ENCODE measurements at regions of chr19 and their contacts with region 1.

Region 1: DNA sequence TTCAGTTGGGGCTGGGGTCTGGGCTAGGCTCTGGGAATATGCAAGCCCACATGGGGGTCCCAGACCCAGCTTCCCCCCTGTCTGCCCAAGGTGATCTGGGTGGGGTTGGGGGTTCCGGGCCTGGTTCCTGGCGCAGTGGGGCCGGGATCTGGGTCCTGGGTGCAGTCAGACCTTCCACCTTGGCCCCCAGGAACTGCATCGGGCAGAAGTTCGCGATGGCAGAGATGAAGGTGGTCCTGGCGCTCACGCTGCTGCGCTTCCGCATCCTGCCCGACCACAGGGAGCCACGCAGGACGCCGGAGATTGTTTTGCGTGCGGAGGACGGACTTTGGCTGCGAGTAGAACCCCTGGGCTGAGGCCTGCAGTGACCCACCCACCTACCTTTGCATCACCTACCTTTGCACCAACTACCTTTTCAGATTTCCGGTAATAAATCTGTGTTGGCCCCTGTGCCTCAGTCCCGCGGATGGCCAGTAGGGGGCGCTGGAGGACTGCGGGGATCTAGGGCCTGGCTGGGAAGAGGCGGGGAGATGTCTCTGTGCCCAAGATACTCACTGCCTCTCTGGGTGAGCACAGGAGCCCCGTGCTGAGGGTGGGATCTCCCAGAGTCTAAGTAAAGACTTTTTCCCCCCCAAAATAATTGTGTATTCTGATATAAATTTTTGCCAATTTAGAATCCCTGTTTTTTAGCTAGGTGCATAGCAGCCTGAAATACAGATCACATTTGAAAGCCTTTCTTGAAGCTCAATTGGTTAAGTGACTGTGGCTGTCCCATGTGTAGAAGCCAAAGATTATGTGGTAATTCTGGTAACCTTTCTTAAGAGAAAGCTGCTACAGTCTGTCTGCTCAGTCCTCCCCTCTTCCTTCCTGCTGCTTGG is 11.5 kb upstream of the CYP4F3 start:
- DNase-seq: peak; percentile 69 to 80
- H3K4me3 ChIP-seq: no peak overlapping the region
- H3K27ac ChIP-seq: no peak overlapping the region
- H3K4me1 ChIP-seq: 0 out of 2 replicates have a peak, but pooled peaks cover 3% of the 10 kb centered on the region
- H3K27me3 ChIP-seq: no peaks in the 10 kb centered on the region
- CTCF ChIP-seq: peak; percentile 100

Region 2: GRCh38 chr19:15584541-15585115 is 44.6 kb before region 1 on chr19:
- CTCF ChIA-PET with region 1: no interaction called
- POLR2A ChIA-PET with region 1: no interaction called
- intact Hi-C with region 1: loop called (anchors 2 kb)
- DNase-seq: peak; percentile 68 to 78
- H3K4me3 ChIP-seq: no peak overlapping the region
- H3K27ac ChIP-seq: no peak overlapping the region
- H3K4me1 ChIP-seq: no peaks in the 10 kb centered on the region
- H3K27me3 ChIP-seq: peaks cover 19% of the 10 kb centered on the region
- CTCF ChIP-seq: peak; percentile 95

Region 3: GRCh38 chr19:15684831-15685230 is 55.6 kb after region 1 on chr19:
- CTCF ChIA-PET with region 1: no interaction called
- POLR2A ChIA-PET with region 1: no interaction called
- intact Hi-C with region 1: no loop called
- DNase-seq: peak in 1 of 2 experiments; percentile 16
- H3K4me3 ChIP-seq: no peak overlapping the region
- H3K27ac ChIP-seq: no peak overlapping the region
- H3K4me1 ChIP-seq: no peaks in the 10 kb centered on the region
- H3K27me3 ChIP-seq: no peaks in the 10 kb centered on the region
- CTCF ChIP-seq: no peak

Region 4: GRCh38 chr19:15810335-15810734 is 181.1 kb after region 1 on chr19:
- CTCF ChIA-PET with region 1: no interaction called
- POLR2A ChIA-PET with region 1: no interaction called
- intact Hi-C with region 1: loop called (anchors 1 kb)
- DNase-seq: peak; percentile 37 to 63
- H3K4me3 ChIP-seq: no peak overlapping the region
- H3K27ac ChIP-seq: no peak overlapping the region
- H3K4me1 ChIP-seq: peaks cover 6% of the 10 kb centered on the region; the same call in 1 of the 2 replicates
- H3K27me3 ChIP-seq: no peaks in the 10 kb centered on the region
- CTCF ChIP-seq: peak; percentile 63

Region 5: GRCh38 chr19:15869109-15869555 is 239.9 kb after region 1 on chr19:
- CTCF ChIA-PET with region 1: no interaction called
- POLR2A ChIA-PET with region 1: no interaction called
- intact Hi-C with region 1: loop called (anchors 1 kb)
- DNase-seq: peak; percentile 58 to 81
- H3K4me3 ChIP-seq: no peak overlapping the region
- H3K27ac ChIP-seq: no peak overlapping the region
- H3K4me1 ChIP-seq: peaks cover 16% of the 10 kb centered on the region
- H3K27me3 ChIP-seq: no peaks in the 10 kb centered on the region
- CTCF ChIP-seq: peak; percentile 91

Region 6: GRCh38 chr19:16025108-16026101 is 396.2 kb after region 1 on chr19:
- CTCF ChIA-PET with region 1: no interaction called
- POLR2A ChIA-PET with region 1: no interaction called
- intact Hi-C with region 1: loop called (anchors 5 kb)
- DNase-seq: peak; percentile 67 to 81
- H3K4me3 ChIP-seq: no peak overlapping the region
- H3K27ac ChIP-seq: no peak overlapping the region
- H3K4me1 ChIP-seq: no peaks in the 10 kb centered on the region
- H3K27me3 ChIP-seq: no peaks in the 10 kb centered on the region
- CTCF ChIP-seq: peak; percentile 84